CD4-positive, alpha-beta memory T cell (primary cell): ENCODE measurements at regions of chr6 and their contacts with region 1.

Region 1: DNA sequence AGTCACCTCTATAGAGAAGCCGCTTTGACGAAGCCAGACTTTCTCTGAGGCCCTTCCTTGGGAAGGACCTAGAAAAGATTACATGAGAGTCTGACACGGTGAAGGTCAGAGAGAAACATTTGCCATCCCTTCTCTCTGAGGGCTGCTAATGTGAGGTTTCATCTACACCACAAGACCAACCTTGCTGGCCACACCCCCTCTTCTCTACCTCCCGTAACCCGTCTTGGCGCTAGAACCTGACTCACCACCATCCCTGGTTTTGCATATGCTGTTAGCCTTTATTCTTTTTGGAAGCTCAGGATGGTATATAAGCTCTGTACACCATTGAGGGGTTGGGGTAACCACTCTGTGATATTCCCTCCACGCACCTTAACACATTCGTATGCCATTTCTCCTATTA is 63.6 kb downstream of the FOXF2 start:
- DNase-seq: no peak
- H3K4me3 ChIP-seq: no peak overlapping the region
- H3K4me3 Mint-ChIP-seq: no peak overlapping the region
- H3K27ac ChIP-seq: no peak overlapping the region
- H3K27ac Mint-ChIP-seq: no peak overlapping the region
- H3K4me1 ChIP-seq: no peaks in the 10 kb centered on the region
- H3K4me1 Mint-ChIP-seq: no peaks in the 10 kb centered on the region
- H3K27me3 ChIP-seq: no peaks in the 10 kb centered on the region
- H3K27me3 Mint-ChIP-seq: peaks cover 14 to 30% of the 10 kb centered on the region in 2 donors

Region 2: DNA sequence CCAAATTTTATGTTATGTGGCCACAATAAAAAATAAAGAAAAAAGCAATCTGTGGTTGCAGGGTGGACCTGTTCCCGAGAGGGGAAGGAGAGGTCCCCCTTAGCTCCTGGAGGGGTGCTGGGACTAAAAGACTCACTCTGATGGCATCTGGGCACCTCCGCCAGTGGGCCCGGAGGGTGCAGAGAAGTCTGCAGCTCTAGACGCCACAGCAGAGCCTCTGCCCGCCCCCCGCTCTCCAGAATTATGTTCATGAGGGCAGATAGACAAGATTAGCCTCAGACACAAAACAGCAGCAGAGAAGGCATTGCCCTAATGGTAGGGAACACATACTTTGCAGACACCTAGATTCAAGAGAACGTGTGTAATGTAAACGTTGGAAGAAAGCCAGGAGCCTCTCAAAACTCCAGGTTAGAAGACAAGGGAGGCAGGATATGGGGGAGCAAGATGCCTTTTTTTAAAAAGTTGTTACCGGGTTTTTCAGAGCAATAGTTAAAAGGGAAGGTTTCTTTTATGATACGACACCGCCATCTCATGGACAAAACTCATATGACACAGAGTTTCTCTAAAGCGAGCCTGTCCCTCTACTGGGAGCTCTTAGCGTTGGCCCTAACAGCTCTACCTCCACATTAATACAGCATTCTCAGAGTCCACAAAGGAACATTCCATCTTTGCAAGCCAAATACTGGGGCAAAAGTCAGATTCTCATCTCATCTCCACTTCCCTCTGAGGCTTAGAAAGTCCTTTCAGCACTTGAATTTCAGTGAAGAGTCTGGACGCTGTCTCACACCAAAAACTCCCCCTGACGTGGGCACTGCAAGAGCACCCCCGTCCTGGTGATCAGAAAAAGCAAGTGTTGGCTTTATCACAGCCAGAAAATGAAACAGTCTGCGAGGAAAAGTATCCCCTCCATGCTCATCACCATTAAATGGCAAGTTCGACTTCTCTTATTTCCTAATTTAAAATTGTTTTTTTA is 16.4 kb before region 1 on chr6:
- CTCF ChIA-PET with region 1: interaction called, 4 read pairs
- POLR2A ChIA-PET with region 1: no interaction called
- intact Hi-C with region 1: loop called (anchors 1 kb)
- DNase-seq: peak; percentile 50 to 56 (median 52)
- H3K4me3 ChIP-seq: no peak overlapping the region
- H3K4me3 Mint-ChIP-seq: no peak overlapping the region
- H3K27ac ChIP-seq: no peak overlapping the region
- H3K27ac Mint-ChIP-seq: no peak overlapping the region
- H3K4me1 ChIP-seq: no peaks in the 10 kb centered on the region
- H3K4me1 Mint-ChIP-seq: peaks cover 0 to 3% (median under 1%) of the 10 kb centered on the region in 4 donors
- H3K27me3 ChIP-seq: no peaks in the 10 kb centered on the region
- H3K27me3 Mint-ChIP-seq: peaks cover 31 to 35% of the 10 kb centered on the region in 2 donors

Region 3: GRCh38 chr6:2274981-2275891 is 822.2 kb after region 1 on chr6:
- CTCF ChIA-PET with region 1: no interaction called
- POLR2A ChIA-PET with region 1: no interaction called
- intact Hi-C with region 1: no loop called
- DNase-seq: no peak
- H3K4me3 ChIP-seq: no peak overlapping the region
- H3K4me3 Mint-ChIP-seq: no peak overlapping the region
- H3K27ac ChIP-seq: no peak overlapping the region
- H3K27ac Mint-ChIP-seq: no peak overlapping the region
- H3K4me1 ChIP-seq: no peaks in the 10 kb centered on the region
- H3K4me1 Mint-ChIP-seq: peaks cover 0 to 2% (median 0%) of the 10 kb centered on the region in 4 donors
- H3K27me3 ChIP-seq: no peaks in the 10 kb centered on the region
- H3K27me3 Mint-ChIP-seq: no peaks in the 10 kb centered on the region